ENCODE measurements at regions of chr19 and their contacts with region 1.

Region 1: DNA sequence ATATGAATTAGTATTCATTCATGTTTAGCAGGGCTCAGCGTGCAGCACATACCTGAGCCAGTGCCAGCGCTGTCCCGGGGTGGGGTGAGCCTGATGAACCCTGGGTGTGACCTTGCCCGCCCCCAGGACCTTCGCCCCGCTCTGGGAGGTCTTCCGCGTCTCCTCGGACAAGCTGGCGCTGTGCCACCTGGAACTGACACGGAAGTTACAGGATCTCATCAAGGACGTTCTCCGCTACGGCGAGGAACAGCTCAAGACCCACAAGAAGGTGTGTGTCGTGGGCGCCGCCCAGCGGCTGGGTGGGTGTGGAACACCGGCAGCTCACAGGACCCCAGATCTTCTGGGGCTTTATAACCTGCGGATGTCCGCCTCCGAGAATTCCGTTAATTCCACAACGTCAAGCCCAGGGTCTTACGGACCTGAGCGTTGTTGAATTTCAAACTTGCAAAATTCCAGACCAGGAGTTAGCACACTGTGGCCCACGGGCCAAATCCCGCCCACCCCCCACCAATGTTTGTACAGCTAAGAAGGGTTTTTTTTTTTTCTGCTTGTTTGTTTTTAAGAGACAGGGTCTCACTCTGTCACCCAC is 15.4 kb downstream of the FCHO1 start:
- DNase-seq: peak; percentile 86 to 88
- H3K4me3 ChIP-seq: peak overlapping the region; percentile 46; the same call in 1 of the 2 replicates
- H3K27ac ChIP-seq: no peak overlapping the region
- H3K4me1 ChIP-seq: peaks cover 14% of the 10 kb centered on the region
- H3K27me3 ChIP-seq: no peaks in the 10 kb centered on the region
- CTCF ChIP-seq: peak; percentile 96

Region 2: GRCh38 chr19:17448131-17448967 is 318.3 kb before region 1 on chr19 and contains the start of gene TMEM221:
- CTCF ChIA-PET with region 1: no interaction called
- POLR2A ChIA-PET with region 1: no interaction called
- intact Hi-C with region 1: loop called (anchors 1 kb)
- DNase-seq: peak in 1 of 2 experiments; percentile 51
- H3K4me3 ChIP-seq: peak within 1 kb of the TSS; percentile 76
- H3K27ac ChIP-seq: no peak within 1 kb of the TSS
- H3K4me1 ChIP-seq: peaks cover 14% of the 10 kb centered on the region
- H3K27me3 ChIP-seq: no peaks in the 10 kb centered on the region
- CTCF ChIP-seq: peak; percentile 71
- total RNA-seq, gene TMEM221: 2.0 and 3.9 TPM in 2 replicates

Region 3: DNA sequence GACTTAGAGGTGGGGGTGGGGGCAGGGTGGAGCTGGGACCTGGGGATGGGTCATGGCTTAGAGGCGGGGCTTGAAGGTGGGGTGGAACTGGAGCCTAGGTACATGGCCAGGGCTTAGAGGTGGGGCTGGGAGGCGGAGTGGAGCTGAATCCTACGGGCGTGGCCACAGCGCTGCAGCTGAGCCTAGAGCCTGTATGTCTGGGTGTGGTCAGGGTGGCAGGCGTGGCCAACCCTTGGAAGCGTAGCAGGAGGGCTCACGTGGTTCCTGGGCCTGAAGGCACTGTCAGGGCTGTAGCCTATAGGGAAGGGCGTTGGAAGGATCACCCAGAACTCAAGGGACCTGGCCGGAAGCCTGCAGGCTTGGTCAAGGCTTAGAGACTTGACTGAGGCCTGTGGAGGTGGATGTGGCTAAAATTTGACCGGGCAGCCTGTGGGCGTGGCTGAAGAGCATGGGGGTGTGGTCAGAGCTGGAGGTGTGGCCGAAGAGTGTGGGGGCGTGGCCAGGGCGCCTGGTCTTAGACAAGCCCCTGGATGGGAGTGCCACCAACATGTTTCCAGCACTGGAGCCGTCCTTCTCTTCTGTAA is 186.9 kb before region 1 on chr19:
- CTCF ChIA-PET with region 1: interaction called, 6 read pairs
- POLR2A ChIA-PET with region 1: no interaction called
- intact Hi-C with region 1: loop called (anchors 1 kb)
- DNase-seq: peak; percentile 59 to 81
- H3K4me3 ChIP-seq: no peak overlapping the region
- H3K27ac ChIP-seq: no peak overlapping the region
- H3K4me1 ChIP-seq: no peaks in the 10 kb centered on the region
- H3K27me3 ChIP-seq: no peaks in the 10 kb centered on the region
- CTCF ChIP-seq: no peak

Region 4: GRCh38 chr19:17616961-17617806 is 149.5 kb before region 1 on chr19:
- CTCF ChIA-PET with region 1: interaction called, 11 read pairs
- POLR2A ChIA-PET with region 1: no interaction called
- intact Hi-C with region 1: no loop called
- DNase-seq: peak in 1 of 2 experiments; percentile 81
- H3K4me3 ChIP-seq: no peak overlapping the region
- H3K27ac ChIP-seq: no peak overlapping the region
- H3K4me1 ChIP-seq: no peaks in the 10 kb centered on the region
- H3K27me3 ChIP-seq: peaks cover 14% of the 10 kb centered on the region; the same call in 1 of the 2 replicates
- CTCF ChIP-seq: no peak

Region 5: DNA sequence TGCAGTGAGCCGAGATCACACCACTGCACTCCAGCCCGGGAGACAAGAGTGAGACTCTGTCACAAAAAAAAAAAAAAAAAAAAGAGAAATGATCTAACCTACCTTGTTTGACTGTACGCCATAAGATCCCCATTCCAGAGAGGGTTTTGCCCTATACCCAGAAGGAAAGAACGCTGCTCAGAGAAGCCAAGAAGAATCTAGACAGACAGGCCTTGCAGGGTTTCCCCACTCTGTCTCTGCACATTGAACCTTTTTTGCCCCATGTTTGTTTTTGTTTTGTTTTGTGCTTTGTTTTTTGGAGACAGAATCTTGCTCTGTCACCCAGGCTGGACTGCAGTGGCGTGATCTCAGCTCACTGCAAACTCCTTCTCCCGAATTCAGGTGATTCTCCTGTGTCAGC is 54.8 kb before region 1 on chr19:
- CTCF ChIA-PET with region 1: interaction called, 3 read pairs
- POLR2A ChIA-PET with region 1: no interaction called
- intact Hi-C with region 1: loop called (anchors 5 kb)
- DNase-seq: peak; percentile 69 to 92
- H3K4me3 ChIP-seq: no peak overlapping the region
- H3K27ac ChIP-seq: peak overlapping the region; percentile 69
- H3K4me1 ChIP-seq: peaks cover 16% of the 10 kb centered on the region
- H3K27me3 ChIP-seq: no peaks in the 10 kb centered on the region
- CTCF ChIP-seq: no peak